ENCODE measurements at regions of chr17 and their contacts with region 1.

Region 1: GRCh38 chr17:59803372-59803747 is 89.4 kb downstream of the TUBD1 start:
- DNase-seq: no peak
- ATAC-seq: no peak
- H3K4me3 ChIP-seq: no peak overlapping the region
- H3K27ac ChIP-seq: no peak overlapping the region
- H3K4me1 ChIP-seq: no peaks in the 10 kb centered on the region
- H3K27me3 ChIP-seq: no peaks in the 10 kb centered on the region
- CTCF ChIP-seq: no peak
- POLR2A ChIP-seq: no peak

Region 2: DNA sequence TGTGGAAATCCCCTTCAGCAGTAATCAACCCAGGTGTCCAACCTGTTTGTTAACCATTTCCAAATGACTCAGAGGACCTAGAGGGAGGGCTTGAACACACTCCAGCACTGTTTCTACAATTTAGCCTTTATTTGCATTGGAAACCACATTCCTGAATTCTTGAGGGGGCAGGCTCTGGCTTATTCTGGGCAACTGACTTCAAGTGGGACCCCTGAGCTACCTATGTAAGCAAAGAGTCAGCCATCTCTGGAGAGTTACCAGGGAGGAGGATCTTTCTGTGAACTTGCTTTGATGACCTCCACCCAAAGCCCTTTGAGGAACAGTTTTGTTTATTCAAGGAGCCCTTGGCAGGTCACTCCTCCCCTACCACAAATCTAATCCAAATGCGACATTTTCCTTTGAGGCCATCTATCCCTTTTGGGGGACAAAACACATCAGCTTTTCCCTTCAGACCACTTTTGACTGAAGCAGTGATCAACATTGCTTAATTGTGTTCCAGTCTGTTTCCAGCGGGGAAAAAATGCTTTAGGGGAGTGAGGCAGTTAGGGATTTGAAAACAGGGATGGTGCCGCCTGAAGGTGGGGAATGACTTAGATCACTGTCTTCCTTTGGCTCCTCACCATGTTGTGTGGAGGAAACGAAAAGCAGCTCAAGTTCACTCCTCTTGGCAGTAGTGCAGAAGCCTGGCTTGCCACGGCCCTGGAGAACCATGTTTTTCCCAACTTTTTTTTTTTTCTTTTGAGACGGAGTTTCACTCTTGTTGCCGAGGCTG is 43.2 kb after region 1 on chr17:
- in situ Hi-C with region 1: no loop called
- intact Hi-C with region 1: loop called (anchors 1 kb)
- DNase-seq: peak; percentile 76 to 82
- ATAC-seq: peak; percentile 56 to 63
- H3K4me3 ChIP-seq: peak overlapping the region in 3 of 4 donors; percentile 5 to 33 (median 24)
- H3K27ac ChIP-seq: peak overlapping the region; percentile 88 to 99 (median 91)
- H3K4me1 ChIP-seq: peaks cover 30 to 41% of the 10 kb centered on the region in 2 donors
- H3K27me3 ChIP-seq: no peaks in the 10 kb centered on the region
- CTCF ChIP-seq: no peak
- POLR2A ChIP-seq: no peak